Posterior cingulate gyrus (tissue), 11 donors: ENCODE measurements at regions of chr16 and their contacts with region 1.

Region 1: DNA sequence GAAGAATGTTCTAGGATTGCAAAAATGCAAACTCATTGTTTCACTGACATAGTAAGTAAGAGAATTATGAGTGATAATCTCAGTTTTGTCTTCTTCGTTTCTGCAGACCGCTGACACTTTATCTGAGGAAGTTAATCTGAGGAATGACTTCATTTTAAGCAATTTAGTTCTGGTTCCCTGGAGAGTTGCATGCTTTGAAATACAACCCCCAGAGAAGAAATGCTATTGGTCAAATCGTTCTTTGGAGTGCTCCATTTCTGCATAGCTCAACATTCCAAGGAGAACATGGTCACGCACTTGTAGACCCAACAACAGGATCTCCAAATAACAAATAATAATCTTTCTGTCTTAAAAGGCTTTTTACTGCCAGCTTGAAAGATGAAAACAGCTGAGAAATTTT is 427.1 kb downstream of the GRIN2A start:
- DNase-seq: no peak

Region 2: DNA sequence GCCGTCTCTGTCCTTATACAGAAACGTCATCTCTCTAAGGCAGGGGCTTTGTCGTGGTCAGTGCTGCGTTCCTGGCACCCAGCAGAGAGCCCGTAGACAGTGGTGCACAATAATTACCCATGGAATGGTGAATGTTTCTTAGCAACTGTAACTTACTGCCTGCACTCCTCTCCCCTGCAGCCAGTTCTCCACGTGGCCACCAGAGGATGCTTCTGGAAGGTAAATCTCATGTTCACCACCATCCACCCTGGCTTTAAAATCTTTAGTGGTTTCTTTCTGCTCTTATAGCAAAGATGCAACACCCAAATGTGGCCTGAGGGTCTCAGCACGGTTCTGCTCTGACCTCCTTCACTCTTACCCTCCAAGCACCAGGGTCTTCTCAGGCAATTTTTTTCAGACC is 276.4 kb after region 1 on chr16:
- intact Hi-C with region 1: loop called (anchors 5 kb)
- DNase-seq: no peak